CD4-positive, alpha-beta memory T cell (primary cell): ENCODE measurements at regions of chr1 and their contacts with region 1.

Region 1: GRCh38 chr1:94025383-94026340 is 95.3 kb downstream of the ABCA4 start:
- DNase-seq: peak in 1 of 5 donors; percentile 11
- H3K4me3 ChIP-seq: no peak overlapping the region
- H3K4me3 Mint-ChIP-seq: no peak overlapping the region
- H3K27ac ChIP-seq: no peak overlapping the region
- H3K27ac Mint-ChIP-seq: no peak overlapping the region
- H3K4me1 ChIP-seq: no peaks in the 10 kb centered on the region
- H3K4me1 Mint-ChIP-seq: no peaks in the 10 kb centered on the region
- H3K27me3 ChIP-seq: no peaks in the 10 kb centered on the region
- H3K27me3 Mint-ChIP-seq: peaks cover 2 to 6% of the 10 kb centered on the region in 2 donors

Region 2: GRCh38 chr1:94000510-94001282 is 25.0 kb before region 1 on chr1:
- CTCF ChIA-PET with region 1: no interaction called
- POLR2A ChIA-PET with region 1: no interaction called
- intact Hi-C with region 1: no loop called
- DNase-seq: no peak
- H3K4me3 ChIP-seq: no peak overlapping the region
- H3K4me3 Mint-ChIP-seq: no peak overlapping the region
- H3K27ac ChIP-seq: no peak overlapping the region
- H3K27ac Mint-ChIP-seq: no peak overlapping the region
- H3K4me1 ChIP-seq: no peaks in the 10 kb centered on the region
- H3K4me1 Mint-ChIP-seq: no peaks in the 10 kb centered on the region
- H3K27me3 ChIP-seq: no peaks in the 10 kb centered on the region
- H3K27me3 Mint-ChIP-seq: peaks cover 13 to 21% of the 10 kb centered on the region in 2 donors

Region 3: DNA sequence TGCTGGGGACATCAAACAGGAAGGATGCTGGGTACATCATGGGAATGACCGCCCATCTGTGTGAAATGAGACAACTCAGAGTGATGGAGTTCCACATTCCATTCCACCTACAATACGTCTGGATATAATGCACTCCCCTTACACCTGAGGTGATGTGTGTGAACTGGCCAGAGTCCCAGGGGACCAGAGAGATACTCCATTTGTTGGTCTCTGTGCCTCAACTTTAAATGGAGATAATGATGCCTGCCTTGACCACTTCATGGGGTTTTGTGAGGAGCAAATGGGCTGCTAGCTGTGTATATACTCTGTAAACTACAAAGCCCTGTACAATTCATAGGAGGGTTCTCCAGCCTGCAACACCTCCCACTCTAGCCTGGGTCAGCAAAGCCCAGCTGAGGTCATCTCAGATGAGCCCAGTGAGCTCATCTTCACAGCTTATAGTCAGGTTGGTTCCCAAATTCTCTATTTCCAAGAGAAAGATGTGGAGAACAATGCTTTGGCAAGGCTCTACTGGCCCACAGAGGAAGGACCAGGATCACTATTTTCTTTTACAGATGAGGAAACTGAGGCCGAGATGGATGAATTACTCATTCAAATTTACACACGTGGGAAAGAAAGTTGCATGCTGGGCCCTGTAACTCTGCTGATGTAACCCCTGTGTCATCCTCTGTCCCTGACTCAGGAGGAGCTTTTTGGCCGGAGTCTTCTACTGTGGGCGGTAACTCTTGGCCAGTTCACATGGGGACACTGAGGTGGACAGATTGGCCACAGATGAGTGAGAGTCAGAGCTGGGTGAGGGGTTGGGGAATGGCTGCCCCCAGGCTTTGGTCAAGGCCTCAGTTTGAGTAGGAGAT is 10.8 kb before region 1 on chr1:
- CTCF ChIA-PET with region 1: interaction called, 10 read pairs
- POLR2A ChIA-PET with region 1: no interaction called
- intact Hi-C with region 1: no loop called
- DNase-seq: no peak
- H3K4me3 ChIP-seq: no peak overlapping the region
- H3K4me3 Mint-ChIP-seq: peak overlapping the region in 1 of 8 donors; percentile 36
- H3K27ac ChIP-seq: no peak overlapping the region
- H3K27ac Mint-ChIP-seq: no peak overlapping the region
- H3K4me1 ChIP-seq: peaks cover 7% of the 10 kb centered on the region
- H3K4me1 Mint-ChIP-seq: peaks cover 8 to 21% (median 16%) of the 10 kb centered on the region in 4 donors
- H3K27me3 ChIP-seq: no peaks in the 10 kb centered on the region
- H3K27me3 Mint-ChIP-seq: peaks cover 0 to 6% of the 10 kb centered on the region in 2 donors

Region 4: DNA sequence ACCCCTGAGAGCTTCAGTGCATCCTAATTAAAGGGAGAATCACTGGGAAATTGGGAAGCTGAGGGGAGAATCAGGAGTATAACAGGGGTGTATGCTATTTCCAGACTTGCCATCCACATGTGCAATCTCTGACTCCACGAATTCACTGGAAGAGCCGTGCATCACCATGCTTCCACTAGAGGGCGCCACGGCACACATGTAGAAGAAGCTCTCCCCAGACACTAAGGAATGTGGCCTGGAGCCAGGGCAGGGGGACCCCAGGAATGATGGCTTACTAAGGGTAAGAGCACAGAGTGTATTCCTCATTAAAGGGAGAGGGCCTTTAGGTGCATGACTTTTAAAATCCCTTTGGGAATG is 13.8 kb after region 1 on chr1:
- CTCF ChIA-PET with region 1: interaction called, 69 read pairs
- POLR2A ChIA-PET with region 1: no interaction called
- intact Hi-C with region 1: no loop called
- DNase-seq: peak in 4 of 5 donors; percentile 22 to 37 (median 25)
- H3K4me3 ChIP-seq: no peak overlapping the region
- H3K4me3 Mint-ChIP-seq: no peak overlapping the region
- H3K27ac ChIP-seq: no peak overlapping the region
- H3K27ac Mint-ChIP-seq: no peak overlapping the region
- H3K4me1 ChIP-seq: no peaks in the 10 kb centered on the region
- H3K4me1 Mint-ChIP-seq: peaks cover 0 to 2% (median 0%) of the 10 kb centered on the region in 4 donors
- H3K27me3 ChIP-seq: no peaks in the 10 kb centered on the region
- H3K27me3 Mint-ChIP-seq: peaks cover 17 to 34% of the 10 kb centered on the region in 2 donors